CD4-positive, alpha-beta T cell (primary cell): ENCODE measurements at regions of chr12 and their contacts with region 1.

Region 1: GRCh38 chr12:46442239-46442638 is 69.7 kb upstream of the SLC38A2 start:
- DNase-seq: no peak
- ATAC-seq: no peak
- H3K4me3 ChIP-seq: no peak overlapping the region
- H3K4me3 Mint-ChIP-seq: no peak overlapping the region
- H3K27ac ChIP-seq: no peak overlapping the region
- H3K27ac Mint-ChIP-seq: no peak overlapping the region
- H3K4me1 ChIP-seq: no peaks in the 10 kb centered on the region
- H3K4me1 Mint-ChIP-seq: peaks cover 9% of the 10 kb centered on the region
- H3K27me3 ChIP-seq: no peaks in the 10 kb centered on the region
- H3K27me3 Mint-ChIP-seq: no peaks in the 10 kb centered on the region
- CTCF ChIP-seq: no peak

Region 2: GRCh38 chr12:46391630-46392029 is 50.6 kb before region 1 on chr12:
- CTCF ChIA-PET with region 1: no interaction called
- POLR2A ChIA-PET with region 1: no interaction called
- intact Hi-C with region 1: loop called in 1 of 2 experiments (anchors 5 kb)
- DNase-seq: no peak
- ATAC-seq: no peak
- H3K4me3 ChIP-seq: no peak overlapping the region
- H3K4me3 Mint-ChIP-seq: no peak overlapping the region
- H3K27ac ChIP-seq: no peak overlapping the region
- H3K27ac Mint-ChIP-seq: no peak overlapping the region
- H3K4me1 ChIP-seq: no peaks in the 10 kb centered on the region
- H3K4me1 Mint-ChIP-seq: peaks cover 33% of the 10 kb centered on the region
- H3K27me3 ChIP-seq: no peaks in the 10 kb centered on the region
- H3K27me3 Mint-ChIP-seq: no peaks in the 10 kb centered on the region
- CTCF ChIP-seq: no peak

Region 3: GRCh38 chr12:46430340-46430948 is 11.8 kb before region 1 on chr12:
- CTCF ChIA-PET with region 1: no interaction called
- POLR2A ChIA-PET with region 1: no interaction called
- intact Hi-C with region 1: no loop called
- DNase-seq: peak in 4 of 14 experiments; percentile 14 to 55 (median 35)
- ATAC-seq: peak; percentile 74
- H3K4me3 ChIP-seq: no peak overlapping the region
- H3K4me3 Mint-ChIP-seq: no peak overlapping the region
- H3K27ac ChIP-seq: no peak overlapping the region
- H3K27ac Mint-ChIP-seq: peak overlapping the region; percentile 8
- H3K4me1 ChIP-seq: no peaks in the 10 kb centered on the region
- H3K4me1 Mint-ChIP-seq: peaks cover 7% of the 10 kb centered on the region
- H3K27me3 ChIP-seq: no peaks in the 10 kb centered on the region
- H3K27me3 Mint-ChIP-seq: no peaks in the 10 kb centered on the region
- CTCF ChIP-seq: no peak